ENCODE measurements at regions of chr1 and their contacts with region 1.

Region 1: GRCh38 chr1:218361298-218362065 is 16.3 kb downstream of the TGFB2 start:
- DNase-seq: no peak
- H3K4me3 ChIP-seq: no peak overlapping the region
- H3K27ac ChIP-seq: no peak overlapping the region
- H3K4me1 ChIP-seq: no peaks in the 10 kb centered on the region
- H3K27me3 ChIP-seq: no peaks in the 10 kb centered on the region
- CTCF ChIP-seq: peak in 2 of 4 experiments; percentile 29 to 36
- POLR2A ChIP-seq: no peak

Region 2: GRCh38 chr1:218112862-218113261 is 248.6 kb before region 1 on chr1:
- intact Hi-C with region 1: no loop called
- DNase-seq: no peak
- H3K4me3 ChIP-seq: no peak overlapping the region
- H3K27ac ChIP-seq: no peak overlapping the region
- H3K4me1 ChIP-seq: no peaks in the 10 kb centered on the region
- H3K27me3 ChIP-seq: no peaks in the 10 kb centered on the region
- CTCF ChIP-seq: no peak
- POLR2A ChIP-seq: no peak

Region 3: DNA sequence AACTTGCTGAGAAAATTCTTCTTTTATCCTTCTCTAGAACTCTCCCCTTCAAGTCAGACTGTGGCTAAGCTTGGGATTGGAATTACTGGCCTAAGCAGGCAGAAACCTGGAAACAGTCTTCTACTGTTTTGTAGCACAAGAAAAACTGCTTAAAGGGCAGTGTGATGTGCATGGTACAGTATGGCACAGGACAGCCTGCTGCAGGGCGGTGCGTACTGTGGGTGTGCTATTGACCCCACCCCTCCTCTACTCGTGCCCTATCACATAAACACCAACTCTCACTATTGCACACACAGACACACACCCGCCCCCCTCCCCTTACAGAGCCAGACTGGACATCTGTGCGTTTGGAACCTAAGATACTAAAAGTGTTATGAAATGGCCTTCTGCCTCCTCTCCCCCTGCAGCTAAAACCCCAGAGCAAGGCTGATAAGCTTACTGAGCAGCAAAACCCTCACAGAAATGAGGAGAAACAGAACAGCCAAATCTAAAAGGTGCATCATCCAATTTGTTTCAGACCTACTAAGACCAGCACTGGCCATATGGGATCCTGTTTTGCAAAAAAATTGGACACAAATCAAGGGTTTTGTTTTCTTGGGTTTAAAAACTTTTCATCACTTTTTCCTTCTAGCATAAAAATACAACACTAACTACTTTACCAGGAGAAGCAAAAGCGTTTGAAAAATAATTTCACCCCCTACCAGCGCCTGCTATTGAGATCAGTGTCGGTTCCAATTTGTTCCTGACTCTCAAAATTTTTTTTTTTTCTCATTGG is 456.4 kb after region 1 on chr1:
- intact Hi-C with region 1: loop called (anchors 10 kb)
- DNase-seq: no peak
- H3K4me3 ChIP-seq: no peak overlapping the region
- H3K27ac ChIP-seq: peak overlapping the region; percentile 22
- H3K4me1 ChIP-seq: no peaks in the 10 kb centered on the region
- H3K27me3 ChIP-seq: no peaks in the 10 kb centered on the region
- CTCF ChIP-seq: no peak
- POLR2A ChIP-seq: no peak

Measured in prostate gland (tissue), 2 donors.